Natural killer cell (primary cell): ENCODE measurements at regions of chr16 and their contacts with region 1.

Region 1: GRCh38 chr16:85086347-85087291 is 25.7 kb downstream of the CIBAR2 start:
- DNase-seq: peak; percentile 72 to 85
- ATAC-seq: peak; percentile 86 to 96 (median 94)
- H3K4me3 ChIP-seq: no peak overlapping the region
- H3K4me3 Mint-ChIP-seq: peak overlapping the region; percentile 28
- H3K27ac ChIP-seq: no peak overlapping the region
- H3K27ac Mint-ChIP-seq: peak overlapping the region in 1 of 2 donors; percentile 48
- H3K4me1 ChIP-seq: peaks cover 37% of the 10 kb centered on the region
- H3K4me1 Mint-ChIP-seq: peaks cover 7 to 19% of the 10 kb centered on the region in 2 donors
- H3K27me3 ChIP-seq: no peaks in the 10 kb centered on the region
- H3K27me3 Mint-ChIP-seq: peaks cover 6% of the 10 kb centered on the region in 2 donors
- CTCF ChIP-seq: peak; percentile 78

Region 2: DNA sequence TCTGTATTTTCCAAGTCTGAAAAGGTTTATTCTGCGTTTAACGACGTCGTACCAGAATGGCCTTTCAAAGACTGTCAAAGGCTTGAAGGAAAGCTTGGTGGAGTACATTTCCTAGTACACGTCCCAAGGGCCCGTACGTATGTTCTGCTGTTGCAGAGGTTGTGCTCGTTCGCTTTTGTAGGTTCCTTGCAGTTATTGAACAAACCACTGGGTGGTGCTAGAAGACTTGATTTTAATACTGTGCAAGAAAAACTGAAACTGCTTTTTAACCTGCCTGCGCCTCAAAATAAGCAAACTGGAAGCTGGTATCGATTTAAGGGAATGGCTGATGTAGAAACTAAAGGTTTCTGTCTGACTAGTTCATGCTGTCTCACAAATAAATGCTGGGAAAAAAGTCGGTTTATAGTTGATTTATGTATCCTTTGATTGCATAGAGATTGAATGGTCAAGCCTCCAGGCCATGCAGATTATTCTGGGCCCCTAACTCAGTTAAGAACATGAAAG is 332.2 kb before region 1 on chr16:
- intact Hi-C with region 1: loop called (anchors 1 kb)
- DNase-seq: peak; percentile 27 to 89
- ATAC-seq: peak; percentile 76 to 85 (median 85)
- H3K4me3 ChIP-seq: no peak overlapping the region
- H3K4me3 Mint-ChIP-seq: no peak overlapping the region
- H3K27ac ChIP-seq: no peak overlapping the region
- H3K27ac Mint-ChIP-seq: peak overlapping the region; percentile 9 to 44
- H3K4me1 ChIP-seq: peaks cover 26% of the 10 kb centered on the region
- H3K4me1 Mint-ChIP-seq: peaks cover 65 to 76% of the 10 kb centered on the region in 2 donors
- H3K27me3 ChIP-seq: no peaks in the 10 kb centered on the region
- H3K27me3 Mint-ChIP-seq: no peaks in the 10 kb centered on the region
- CTCF ChIP-seq: peak; percentile 77

Region 3: DNA sequence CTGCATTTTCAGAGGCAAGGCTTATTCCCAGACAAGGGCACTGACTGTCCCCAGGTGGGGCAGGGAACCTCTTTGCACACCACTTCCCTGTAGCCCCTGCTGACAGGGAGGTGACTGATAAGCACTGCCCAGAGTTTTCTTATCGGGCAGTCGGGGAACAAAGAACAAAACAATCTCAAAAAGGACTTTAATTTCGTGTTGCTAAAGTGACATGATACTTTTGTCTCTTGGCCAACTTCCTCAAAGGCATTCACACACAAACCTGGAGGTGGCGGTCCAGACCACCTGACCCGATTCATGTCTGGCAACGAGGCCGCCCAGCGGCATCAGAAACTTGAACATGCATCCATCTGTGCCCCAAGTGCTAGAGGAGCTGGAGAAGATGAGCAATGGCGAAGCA is 104.2 kb before region 1 on chr16:
- intact Hi-C with region 1: loop called (anchors 2 kb)
- DNase-seq: peak in 1 of 2 donors; percentile 39
- ATAC-seq: peak; percentile 26 to 46 (median 39)
- H3K4me3 ChIP-seq: no peak overlapping the region
- H3K4me3 Mint-ChIP-seq: no peak overlapping the region
- H3K27ac ChIP-seq: no peak overlapping the region
- H3K27ac Mint-ChIP-seq: peak overlapping the region in 1 of 2 donors; percentile 82
- H3K4me1 ChIP-seq: peaks cover 15% of the 10 kb centered on the region
- H3K4me1 Mint-ChIP-seq: peaks cover 8 to 15% of the 10 kb centered on the region in 2 donors
- H3K27me3 ChIP-seq: no peaks in the 10 kb centered on the region
- H3K27me3 Mint-ChIP-seq: no peaks in the 10 kb centered on the region
- CTCF ChIP-seq: no peak

Region 4: GRCh38 chr16:85010931-85011845 is 75.4 kb before region 1 on chr16 and contains the start of gene ZDHHC7:
- intact Hi-C with region 1: loop called (anchors 2 kb)
- DNase-seq: peak; percentile 86 to 95
- ATAC-seq: peak; percentile 86 to 93 (median 87)
- H3K4me3 ChIP-seq: peak within 1 kb of the TSS; percentile 78
- H3K4me3 Mint-ChIP-seq: peak within 1 kb of the TSS; percentile 99
- H3K27ac ChIP-seq: peak within 1 kb of the TSS; percentile 93
- H3K27ac Mint-ChIP-seq: peak within 1 kb of the TSS; percentile 100
- H3K4me1 ChIP-seq: peaks cover 19% of the 10 kb centered on the region
- H3K4me1 Mint-ChIP-seq: peaks cover 24 to 41% of the 10 kb centered on the region in 2 donors
- H3K27me3 ChIP-seq: no peaks in the 10 kb centered on the region
- H3K27me3 Mint-ChIP-seq: peaks cover 0 to 4% of the 10 kb centered on the region in 2 donors
- CTCF ChIP-seq: no peak
- total RNA-seq, gene ZDHHC7: 37.9 to 64.9 (median 45.2) TPM

Region 5: GRCh38 chr16:85027349-85027957 is 59.2 kb before region 1 on chr16 and contains the start of gene KIAA0513:
- intact Hi-C with region 1: loop called (anchors 5 kb)
- DNase-seq: peak; percentile 98
- ATAC-seq: peak; percentile 77 to 93 (median 88)
- H3K4me3 ChIP-seq: peak within 1 kb of the TSS; percentile 88
- H3K4me3 Mint-ChIP-seq: peak within 1 kb of the TSS; percentile 90
- H3K27ac ChIP-seq: peak within 1 kb of the TSS; percentile 78
- H3K27ac Mint-ChIP-seq: peak within 1 kb of the TSS; percentile 79 to 97
- H3K4me1 ChIP-seq: peaks cover 29% of the 10 kb centered on the region
- H3K4me1 Mint-ChIP-seq: peaks cover 20 to 33% of the 10 kb centered on the region in 2 donors
- H3K27me3 ChIP-seq: no peaks in the 10 kb centered on the region
- H3K27me3 Mint-ChIP-seq: no peaks in the 10 kb centered on the region
- CTCF ChIP-seq: peak; percentile 9
- total RNA-seq, gene KIAA0513: 7.9 to 17.7 (median 12.1) TPM

Region 6: GRCh38 chr16:85055503-85056210 is 31.0 kb before region 1 on chr16:
- intact Hi-C with region 1: loop called (anchors 1 kb)
- DNase-seq: peak; percentile 75 to 93
- ATAC-seq: peak; percentile 86 to 97 (median 94)
- H3K4me3 ChIP-seq: peak overlapping the region; percentile 6
- H3K4me3 Mint-ChIP-seq: peak overlapping the region; percentile 78
- H3K27ac ChIP-seq: peak overlapping the region; percentile 85
- H3K27ac Mint-ChIP-seq: peak overlapping the region; percentile 90 to 91
- H3K4me1 ChIP-seq: peaks cover 36% of the 10 kb centered on the region
- H3K4me1 Mint-ChIP-seq: peaks cover 32% of the 10 kb centered on the region in 2 donors
- H3K27me3 ChIP-seq: no peaks in the 10 kb centered on the region
- H3K27me3 Mint-ChIP-seq: peaks cover 2 to 18% of the 10 kb centered on the region in 2 donors
- CTCF ChIP-seq: no peak